ENCODE measurements at regions of chr6 and their contacts with region 1.

Region 1: GRCh38 chr6:167141667-167142432 is 15.9 kb downstream of the GPR31 start:
- DNase-seq: peak; percentile 59 to 80
- H3K4me3 ChIP-seq: no peak overlapping the region
- H3K4me3 Mint-ChIP-seq: no peak overlapping the region
- H3K27ac Mint-ChIP-seq: no peak overlapping the region
- H3K4me1 ChIP-seq: no peaks in the 10 kb centered on the region
- H3K4me1 Mint-ChIP-seq: peaks cover 9% of the 10 kb centered on the region
- H3K27me3 ChIP-seq: no peaks in the 10 kb centered on the region
- H3K27me3 Mint-ChIP-seq: peaks cover 4% of the 10 kb centered on the region
- CTCF ChIP-seq: peak; percentile 84 to 97

Region 2: GRCh38 chr6:166775180-166776081 is 366.4 kb before region 1 on chr6:
- CTCF ChIA-PET with region 1: interaction called, 16 read pairs
- POLR2A ChIA-PET with region 1: no interaction called
- intact Hi-C with region 1: loop called (anchors 1 kb)
- DNase-seq: peak in 1 of 2 experiments; percentile 63
- H3K4me3 ChIP-seq: no peak overlapping the region
- H3K4me3 Mint-ChIP-seq: peak overlapping the region; percentile 63
- H3K27ac Mint-ChIP-seq: no peak overlapping the region
- H3K4me1 ChIP-seq: no peaks in the 10 kb centered on the region
- H3K4me1 Mint-ChIP-seq: peaks cover 7% of the 10 kb centered on the region
- H3K27me3 ChIP-seq: no peaks in the 10 kb centered on the region
- H3K27me3 Mint-ChIP-seq: peaks cover 29% of the 10 kb centered on the region
- CTCF ChIP-seq: peak; percentile 84 to 89

Region 3: DNA sequence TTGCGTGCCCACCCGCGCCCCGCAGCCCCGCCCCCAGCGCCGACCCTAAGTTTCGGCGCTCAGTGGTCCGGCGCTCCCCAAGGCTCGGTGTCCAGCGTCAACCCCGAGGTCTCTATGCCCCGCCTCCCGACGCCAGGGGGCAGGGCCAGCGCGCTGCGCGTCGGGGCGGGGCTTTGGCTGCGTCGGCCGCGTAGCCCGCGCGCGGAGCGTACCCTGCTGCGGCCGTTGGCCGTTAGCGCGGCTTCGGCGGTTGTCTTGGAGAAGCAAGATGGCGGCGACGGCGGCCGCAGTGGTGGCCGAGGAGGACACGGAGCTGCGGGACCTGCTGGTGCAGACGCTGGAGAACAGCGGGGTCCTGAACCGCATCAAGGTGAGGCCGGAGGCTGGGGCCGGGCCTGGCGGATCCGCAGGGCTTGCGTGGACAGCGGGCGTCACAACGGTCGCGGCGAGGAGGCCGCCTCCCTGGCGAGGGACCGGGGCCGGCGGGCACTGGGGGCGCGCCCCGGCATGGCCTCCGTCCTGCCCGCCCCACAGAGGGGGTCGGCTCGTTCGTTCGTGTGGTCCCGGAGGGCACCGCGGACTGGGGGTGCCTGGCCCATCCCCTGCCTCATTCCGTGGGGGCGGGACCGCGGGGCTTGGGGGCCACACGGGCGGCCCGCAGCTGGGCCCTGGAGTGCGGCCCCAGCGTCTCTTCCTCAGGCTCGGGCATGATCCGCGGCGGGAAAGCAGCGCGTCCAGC is 142.5 kb before region 1 on chr6 and contains the start of gene CEP43:
- CTCF ChIA-PET with region 1: interaction called, 9 read pairs
- POLR2A ChIA-PET with region 1: interaction called, 3 read pairs
- intact Hi-C with region 1: loop called (anchors 1 kb)
- DNase-seq: peak; percentile 92 to 95
- H3K4me3 ChIP-seq: peak within 1 kb of the TSS; percentile 67
- H3K4me3 Mint-ChIP-seq: peak within 1 kb of the TSS; percentile 84
- H3K27ac Mint-ChIP-seq: peak within 1 kb of the TSS; percentile 82
- H3K4me1 ChIP-seq: peaks cover 3% of the 10 kb centered on the region; the same call in 1 of the 2 replicates
- H3K4me1 Mint-ChIP-seq: peaks cover 14% of the 10 kb centered on the region
- H3K27me3 ChIP-seq: no peaks in the 10 kb centered on the region
- H3K27me3 Mint-ChIP-seq: no peaks in the 10 kb centered on the region
- CTCF ChIP-seq: no peak
- total RNA-seq, gene CEP43: 36.3 and 37.0 TPM in 2 replicates

Region 4: DNA sequence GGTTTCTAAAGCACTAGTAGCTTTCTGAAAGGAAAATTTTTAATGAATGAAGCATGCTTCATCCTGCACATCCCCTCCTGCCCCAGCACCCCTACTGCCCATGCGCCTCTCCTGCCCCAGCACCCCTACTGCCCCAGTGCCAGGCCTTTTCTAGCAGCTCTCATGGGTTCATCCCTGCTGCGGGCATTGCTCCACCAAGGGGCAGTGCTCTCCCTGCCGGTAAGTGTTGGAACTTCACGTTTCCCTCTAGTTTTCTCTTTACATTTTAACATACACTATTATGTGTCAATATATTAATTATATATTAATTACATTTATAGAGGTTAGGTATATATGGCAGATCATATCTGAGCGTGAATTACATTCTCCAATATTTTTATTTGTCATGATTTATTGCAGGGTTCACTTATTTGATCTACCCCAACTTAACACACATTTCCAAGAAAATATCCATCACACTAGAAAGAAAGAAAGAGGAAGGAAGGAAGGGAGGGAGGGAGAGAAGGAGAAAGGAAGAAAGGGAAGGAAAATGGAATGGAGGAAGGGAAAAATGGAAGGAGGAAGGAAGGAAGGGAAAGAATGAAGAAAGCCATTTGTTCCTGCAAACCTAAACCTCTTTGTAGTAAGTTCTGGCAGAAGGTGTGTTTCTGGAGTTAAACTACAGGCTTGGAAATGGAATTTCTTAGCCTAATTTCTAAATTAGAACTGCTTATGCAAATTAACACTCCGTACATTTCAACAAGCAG is 95.8 kb before region 1 on chr6:
- CTCF ChIA-PET with region 1: interaction called, 3 read pairs
- POLR2A ChIA-PET with region 1: no interaction called
- intact Hi-C with region 1: loop called (anchors 2 kb)
- DNase-seq: no peak
- H3K4me3 ChIP-seq: no peak overlapping the region
- H3K4me3 Mint-ChIP-seq: no peak overlapping the region
- H3K27ac Mint-ChIP-seq: no peak overlapping the region
- H3K4me1 ChIP-seq: no peaks in the 10 kb centered on the region
- H3K4me1 Mint-ChIP-seq: no peaks in the 10 kb centered on the region
- H3K27me3 ChIP-seq: no peaks in the 10 kb centered on the region
- H3K27me3 Mint-ChIP-seq: no peaks in the 10 kb centered on the region
- CTCF ChIP-seq: no peak

Region 5: GRCh38 chr6:167056370-167056769 is 85.5 kb before region 1 on chr6:
- CTCF ChIA-PET with region 1: no interaction called
- POLR2A ChIA-PET with region 1: no interaction called
- intact Hi-C with region 1: loop called (anchors 5 kb)
- DNase-seq: no peak
- H3K4me3 ChIP-seq: no peak overlapping the region
- H3K4me3 Mint-ChIP-seq: no peak overlapping the region
- H3K27ac Mint-ChIP-seq: no peak overlapping the region
- H3K4me1 ChIP-seq: no peaks in the 10 kb centered on the region
- H3K4me1 Mint-ChIP-seq: no peaks in the 10 kb centered on the region
- H3K27me3 ChIP-seq: no peaks in the 10 kb centered on the region
- H3K27me3 Mint-ChIP-seq: peaks cover 3% of the 10 kb centered on the region
- CTCF ChIP-seq: no peak

Region 6: GRCh38 chr6:167119670-167120381 is 22.0 kb before region 1 on chr6:
- CTCF ChIA-PET with region 1: interaction called, 90 read pairs
- POLR2A ChIA-PET with region 1: no interaction called
- intact Hi-C with region 1: loop called (anchors 1 kb)
- DNase-seq: peak; percentile 54 to 72
- H3K4me3 ChIP-seq: no peak overlapping the region
- H3K4me3 Mint-ChIP-seq: no peak overlapping the region
- H3K27ac Mint-ChIP-seq: no peak overlapping the region
- H3K4me1 ChIP-seq: peaks cover 16% of the 10 kb centered on the region
- H3K4me1 Mint-ChIP-seq: peaks cover 13% of the 10 kb centered on the region
- H3K27me3 ChIP-seq: no peaks in the 10 kb centered on the region
- H3K27me3 Mint-ChIP-seq: no peaks in the 10 kb centered on the region
- CTCF ChIP-seq: peak; percentile 60 to 92